ENCODE measurements at regions of chr11 and their contacts with region 1.

Region 1: GRCh38 chr11:93734427-93735222 is 6.7 kb downstream of the TAF1D start:
- DNase-seq: no peak
- H3K4me3 ChIP-seq: peak overlapping the region; percentile 96
- H3K27ac ChIP-seq: no peak overlapping the region
- H3K4me1 ChIP-seq: peaks cover 67% of the 10 kb centered on the region
- CTCF ChIP-seq: no peak

Region 2: DNA sequence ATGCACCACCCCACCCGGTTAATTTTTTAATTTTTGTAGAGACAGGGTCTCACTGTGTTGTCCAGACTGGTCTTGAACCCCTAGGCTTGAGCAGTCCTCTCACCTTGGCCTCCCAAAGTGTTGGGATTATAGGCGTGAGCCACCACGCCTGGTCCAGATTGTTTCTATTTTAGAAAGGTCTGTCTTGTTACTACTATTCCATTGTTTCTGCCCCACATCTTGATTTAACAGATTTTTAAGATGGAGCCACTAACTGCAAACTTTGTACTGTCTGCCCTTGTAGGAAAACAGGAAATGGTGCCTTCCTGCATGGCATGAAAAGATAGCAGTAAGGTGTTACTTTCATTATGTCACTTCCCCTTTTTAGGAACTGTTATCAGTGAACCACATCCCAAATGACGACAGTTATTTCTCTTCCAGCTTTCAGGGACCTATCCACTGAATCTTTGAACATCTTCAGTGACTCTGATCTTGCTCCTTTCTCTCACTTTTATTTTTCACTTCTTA is 16.5 kb before region 1 on chr11:
- CTCF ChIA-PET with region 1: no interaction called
- POLR2A ChIA-PET with region 1: interaction called, 11 read pairs
- intact Hi-C with region 1: no loop called
- DNase-seq: peak; percentile 62
- H3K4me3 ChIP-seq: no peak overlapping the region
- H3K27ac ChIP-seq: peak overlapping the region; percentile 21
- H3K4me1 ChIP-seq: peaks cover 15% of the 10 kb centered on the region
- CTCF ChIP-seq: no peak

Measured in OCI-LY7 (cell line).